ENCODE measurements at regions of chr17 and their contacts with region 1.

Region 1: GRCh38 chr17:35242805-35243560 is at the start of gene SLFN5:
- DNase-seq: peak; percentile 91
- H3K4me3 Mint-ChIP-seq: peak within 1 kb of the TSS; percentile 96
- H3K27ac Mint-ChIP-seq: peak within 1 kb of the TSS; percentile 96
- H3K4me1 Mint-ChIP-seq: peaks cover 63% of the 10 kb centered on the region
- H3K27me3 Mint-ChIP-seq: no peaks in the 10 kb centered on the region
- total RNA-seq, gene SLFN5: 8.8 and 9.9 TPM in 2 replicates

Region 2: DNA sequence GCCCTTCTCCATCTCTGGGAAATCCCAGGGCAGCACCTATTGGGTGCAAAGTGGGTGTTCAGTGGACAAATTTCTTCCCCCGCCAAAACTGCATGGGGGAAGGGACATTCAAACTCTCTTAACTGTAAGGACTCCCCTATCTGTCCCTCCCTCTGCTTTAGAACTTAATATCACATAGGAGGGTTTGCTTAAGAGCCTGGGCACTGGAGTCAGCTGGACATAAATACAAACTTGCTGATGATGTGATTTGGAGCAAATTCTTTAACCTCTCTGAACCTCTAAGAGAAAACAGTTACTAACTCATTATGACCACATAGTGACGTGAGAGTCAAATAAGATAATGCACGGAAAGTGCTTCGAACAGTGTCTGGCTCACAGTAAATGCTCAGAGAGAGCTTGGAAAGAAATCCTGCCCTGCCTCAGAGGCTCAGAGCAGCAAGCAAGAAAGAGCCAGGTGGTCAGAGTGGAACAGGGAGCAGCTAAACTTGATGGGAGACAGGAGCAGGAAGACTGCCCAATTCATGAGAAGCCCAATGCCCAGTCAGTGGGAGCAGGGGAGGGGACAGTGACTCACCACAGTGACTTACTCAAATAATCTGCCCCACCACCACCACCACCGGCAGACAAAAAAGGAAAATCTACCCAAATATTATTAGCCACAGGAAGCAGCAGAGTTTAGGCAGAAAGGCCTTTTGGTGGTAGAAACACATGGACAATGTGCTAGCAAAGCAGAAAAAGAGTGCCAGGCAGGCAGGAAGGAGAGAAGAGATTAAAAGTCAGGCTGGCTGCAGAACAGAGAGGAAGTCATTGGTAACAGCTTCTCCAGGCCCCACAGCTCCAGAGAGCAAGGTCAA is 856.1 kb before region 1 on chr17:
- intact Hi-C with region 1: loop called (anchors 10 kb)
- DNase-seq: no peak
- H3K4me3 Mint-ChIP-seq: peak overlapping the region; percentile 23
- H3K27ac Mint-ChIP-seq: peak overlapping the region; percentile 94
- H3K4me1 Mint-ChIP-seq: peaks cover 82% of the 10 kb centered on the region
- H3K27me3 Mint-ChIP-seq: no peaks in the 10 kb centered on the region

Region 3: DNA sequence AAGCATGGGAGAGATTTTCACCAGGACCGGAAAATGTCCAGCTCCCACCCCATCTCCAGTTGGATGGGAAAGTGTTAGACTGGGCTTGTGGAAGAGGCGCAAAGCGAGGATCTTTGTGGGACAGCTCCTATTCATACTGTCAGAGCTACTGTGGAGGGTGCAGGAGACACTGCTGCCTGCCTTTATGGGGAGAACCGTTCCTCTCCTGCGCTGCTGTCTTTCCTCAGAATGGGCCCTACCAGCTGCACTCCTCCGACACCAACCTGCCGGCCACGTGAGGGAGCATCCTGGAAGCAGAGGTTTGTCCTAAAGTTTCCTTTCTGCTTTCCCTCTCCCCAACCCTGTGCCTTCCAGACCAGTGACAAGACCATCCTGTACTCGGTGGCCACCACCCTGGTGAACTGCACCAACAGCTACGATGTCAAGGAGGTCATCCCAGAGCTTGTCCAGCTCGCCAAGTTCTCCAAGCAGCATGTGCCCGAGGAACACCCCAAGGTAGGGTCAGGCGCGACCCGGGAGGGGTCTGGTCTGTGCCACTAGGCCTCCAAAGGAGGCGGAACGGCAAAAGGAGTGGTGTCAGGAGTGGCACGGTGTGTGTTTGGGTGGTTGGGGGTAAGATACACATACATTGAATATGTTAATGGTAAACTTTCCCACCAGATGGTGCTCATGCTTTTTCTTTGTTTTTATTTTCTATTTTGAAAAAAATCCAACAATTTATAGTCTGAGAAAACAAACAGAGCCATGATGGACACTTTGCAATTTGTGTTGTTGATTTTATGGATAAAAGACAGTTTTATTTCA is 71.8 kb before region 1 on chr17:
- intact Hi-C with region 1: loop called (anchors 5 kb)
- DNase-seq: no peak
- H3K4me3 Mint-ChIP-seq: no peak overlapping the region
- H3K27ac Mint-ChIP-seq: no peak overlapping the region
- H3K4me1 Mint-ChIP-seq: peaks cover 28% of the 10 kb centered on the region
- H3K27me3 Mint-ChIP-seq: no peaks in the 10 kb centered on the region

Region 4: DNA sequence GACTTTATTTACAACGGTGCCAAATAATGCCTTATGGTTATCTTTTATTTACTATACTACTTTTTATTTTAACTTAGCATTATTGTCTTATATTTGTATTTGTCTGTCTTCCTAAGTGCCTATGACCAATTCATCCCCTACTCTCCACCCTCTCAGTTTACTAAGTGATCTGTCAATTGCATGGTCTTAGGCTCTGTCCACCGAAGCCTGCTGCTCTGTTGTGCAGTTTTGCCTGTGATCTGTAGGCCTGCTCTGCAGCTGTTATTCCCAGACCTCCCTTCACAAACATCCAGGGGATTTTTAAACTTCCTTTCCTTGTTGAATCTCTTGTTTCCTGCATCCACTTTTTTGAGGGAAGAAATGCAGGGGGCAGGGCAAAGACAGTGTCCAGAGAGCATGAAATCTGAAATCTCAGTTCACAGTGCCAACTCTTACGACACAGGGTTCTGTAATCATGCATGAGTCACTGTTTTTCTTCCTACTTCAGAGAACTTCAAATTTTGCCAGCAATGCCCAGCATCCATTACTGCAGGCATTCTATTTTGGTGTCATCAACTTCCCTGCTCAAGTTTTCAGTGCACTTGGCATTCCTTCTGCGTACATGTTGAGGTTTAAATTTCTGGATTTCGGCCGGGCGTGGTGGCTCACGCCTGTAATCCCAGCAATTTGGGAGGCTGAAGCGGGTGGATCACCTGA is 11.3 kb after region 1 on chr17:
- intact Hi-C with region 1: no loop called
- DNase-seq: no peak
- H3K4me3 Mint-ChIP-seq: no peak overlapping the region
- H3K27ac Mint-ChIP-seq: no peak overlapping the region
- H3K4me1 Mint-ChIP-seq: peaks cover 16% of the 10 kb centered on the region
- H3K27me3 Mint-ChIP-seq: no peaks in the 10 kb centered on the region

Region 5: GRCh38 chr17:35286120-35286781 is 43.3 kb after region 1 on chr17:
- intact Hi-C with region 1: loop called (anchors 1 kb)
- DNase-seq: peak; percentile 19
- H3K4me3 Mint-ChIP-seq: no peak overlapping the region
- H3K27ac Mint-ChIP-seq: peak overlapping the region; percentile 28
- H3K4me1 Mint-ChIP-seq: peaks cover 38% of the 10 kb centered on the region
- H3K27me3 Mint-ChIP-seq: peaks cover 12% of the 10 kb centered on the region

Region 6: GRCh38 chr17:35373534-35373983 is 130.6 kb after region 1 on chr17 and contains the start of gene SLFN11:
- intact Hi-C with region 1: loop called (anchors 2 kb)
- DNase-seq: peak; percentile 81
- H3K4me3 Mint-ChIP-seq: peak within 1 kb of the TSS; percentile 96
- H3K27ac Mint-ChIP-seq: peak within 1 kb of the TSS; percentile 96
- H3K4me1 Mint-ChIP-seq: peaks cover 56% of the 10 kb centered on the region
- H3K27me3 Mint-ChIP-seq: peaks cover 3% of the 10 kb centered on the region
- total RNA-seq, gene SLFN11: 112 and 114 TPM in 2 replicates

Region 7: DNA sequence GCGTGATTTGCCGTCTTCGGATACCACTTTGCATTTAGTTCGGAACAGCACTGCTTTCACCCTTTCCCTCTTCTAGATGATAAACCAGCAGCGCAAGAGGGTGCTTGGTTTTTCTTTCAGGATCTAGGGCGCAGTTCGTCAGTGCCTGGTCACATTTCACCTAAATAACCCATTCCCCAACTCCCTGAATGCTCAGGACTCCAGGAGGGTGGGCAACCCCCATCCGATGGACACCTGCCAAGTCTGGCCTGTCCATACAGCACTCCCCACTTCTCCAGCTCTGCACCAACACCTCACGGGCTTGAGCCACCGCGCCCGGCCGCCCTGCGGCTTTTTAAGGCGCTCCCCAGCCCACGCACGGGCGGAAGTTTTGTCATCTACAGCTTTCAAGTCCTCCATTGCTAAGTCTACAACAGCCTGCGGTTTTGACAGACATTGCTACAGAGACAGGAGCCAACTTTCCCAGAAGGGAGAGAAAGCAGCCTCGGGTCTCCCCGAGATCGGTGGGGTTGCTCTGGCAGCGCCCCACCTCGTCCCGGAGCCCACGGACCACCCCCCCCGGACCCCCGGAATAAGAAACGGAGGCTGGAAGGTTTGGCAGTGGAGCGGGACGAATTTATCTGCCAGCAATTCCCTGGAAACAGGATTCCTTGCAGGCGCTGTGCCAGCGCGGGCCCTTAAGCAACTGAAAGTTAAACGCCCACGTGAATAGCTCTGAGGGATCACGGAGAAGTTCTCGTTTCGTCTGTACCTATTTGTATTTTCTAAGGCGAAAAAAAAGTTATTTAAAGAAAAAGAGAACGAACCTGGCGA is 244.1 kb after region 1 on chr17:
- intact Hi-C with region 1: loop called (anchors 1 kb)
- DNase-seq: peak; percentile 65
- H3K4me3 Mint-ChIP-seq: peak overlapping the region; percentile 83
- H3K27ac Mint-ChIP-seq: peak overlapping the region; percentile 94
- H3K4me1 Mint-ChIP-seq: peaks cover 49% of the 10 kb centered on the region
- H3K27me3 Mint-ChIP-seq: no peaks in the 10 kb centered on the region

Region 8: DNA sequence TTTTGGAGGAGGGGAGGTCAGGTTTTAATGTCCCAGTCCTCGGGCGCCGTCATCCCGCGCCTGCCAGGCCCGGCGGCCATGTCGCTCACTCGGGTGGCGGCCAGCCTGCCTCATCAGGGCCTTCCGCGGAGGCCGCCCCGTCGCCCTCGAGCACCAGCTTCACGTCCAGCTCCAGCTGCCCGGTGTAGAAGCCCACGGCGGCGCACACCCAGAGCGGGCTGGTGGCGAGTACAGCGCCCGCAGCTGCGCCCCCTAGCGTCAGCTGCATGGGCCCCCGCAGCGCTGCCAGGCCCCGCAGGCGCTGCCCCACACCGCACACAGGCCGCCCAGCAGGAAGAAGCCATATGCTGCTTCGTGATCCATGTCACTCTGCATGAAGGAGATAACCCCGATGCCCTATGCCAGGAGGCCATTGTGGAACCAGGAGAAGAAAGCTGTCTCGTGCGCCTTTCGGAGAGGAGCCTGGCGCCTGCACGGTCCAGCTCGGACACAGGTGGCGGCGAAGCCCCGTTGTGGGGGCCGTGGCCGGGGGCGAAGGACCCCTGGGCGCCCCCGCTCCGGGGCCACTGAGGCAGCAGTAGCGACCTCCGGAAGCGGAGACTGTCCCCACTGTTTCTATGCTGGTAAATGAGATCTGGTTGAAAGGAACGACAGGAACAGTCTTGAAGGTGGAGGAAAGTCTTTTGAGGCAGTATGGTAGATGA is 353.7 kb after region 1 on chr17:
- intact Hi-C with region 1: no loop called
- DNase-seq: no peak
- H3K4me3 Mint-ChIP-seq: no peak overlapping the region
- H3K27ac Mint-ChIP-seq: no peak overlapping the region
- H3K4me1 Mint-ChIP-seq: no peaks in the 10 kb centered on the region
- H3K27me3 Mint-ChIP-seq: no peaks in the 10 kb centered on the region